Right cardiac atrium (tissue), 5 donors: ENCODE measurements at regions of chrX and their contacts with region 1.

Region 1: DNA sequence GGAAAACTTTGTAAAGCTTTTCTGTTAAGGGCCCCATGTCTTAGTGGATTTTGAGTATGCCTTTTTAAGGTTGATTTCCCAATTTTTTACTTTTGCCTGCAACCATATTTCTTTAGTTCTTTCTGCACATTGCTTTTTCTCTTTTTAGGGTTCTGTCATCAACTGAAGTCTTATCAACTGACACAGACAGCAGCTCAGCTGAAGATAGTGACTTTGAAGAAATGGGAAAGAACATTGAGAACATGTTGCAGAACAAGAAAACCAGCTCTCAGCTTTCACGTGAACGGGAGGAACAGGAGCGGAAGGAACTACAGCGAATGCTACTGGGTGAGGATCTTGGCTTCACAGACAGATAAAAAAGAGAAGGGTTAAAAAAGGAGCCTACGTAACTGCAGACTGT is 27.8 kb downstream of the TAF1 start:
- DNase-seq: no peak
- ATAC-seq: no peak
- H3K4me3 ChIP-seq: no peak overlapping the region
- H3K27ac ChIP-seq: no peak overlapping the region
- H3K4me1 ChIP-seq: no peaks in the 10 kb centered on the region
- H3K27me3 ChIP-seq: no peaks in the 10 kb centered on the region

Region 2: DNA sequence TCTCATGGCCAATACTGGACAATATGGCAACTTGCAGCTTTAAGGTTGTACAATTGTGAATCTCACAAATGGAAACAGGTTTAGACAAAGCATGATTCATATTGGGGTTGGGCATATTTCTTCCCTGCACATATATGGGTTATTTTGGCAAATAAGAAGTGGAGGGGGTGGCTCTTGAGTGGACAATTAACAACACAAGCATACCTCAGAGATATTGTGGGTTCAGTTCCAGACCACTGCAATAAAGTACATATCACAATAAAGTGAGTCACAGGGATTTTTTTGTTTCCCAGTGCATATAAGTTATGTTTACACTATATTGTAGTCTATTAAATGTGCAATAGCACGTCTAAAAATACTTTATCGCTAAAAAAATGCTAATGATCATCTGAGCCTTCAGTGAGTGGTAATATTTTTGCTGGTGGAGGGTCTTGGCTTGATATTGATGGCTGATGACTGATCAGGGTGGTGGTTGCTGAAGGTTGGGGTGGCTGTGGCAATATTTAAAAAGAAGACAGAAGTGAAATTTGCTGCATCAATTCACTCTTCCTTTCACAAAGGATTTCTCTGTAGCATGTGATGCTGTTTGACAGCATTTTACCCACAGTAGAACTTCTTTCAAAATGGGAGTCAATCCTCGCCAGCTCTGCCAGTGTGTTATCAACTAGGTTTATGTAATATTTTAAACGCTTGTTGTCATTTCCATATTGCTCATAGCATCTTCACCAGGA is 88.5 kb after region 1 on chrX:
- intact Hi-C with region 1: no loop called
- DNase-seq: no peak
- ATAC-seq: no peak
- H3K4me3 ChIP-seq: no peak overlapping the region
- H3K27ac ChIP-seq: no peak overlapping the region
- H3K4me1 ChIP-seq: no peaks in the 10 kb centered on the region
- H3K27me3 ChIP-seq: no peaks in the 10 kb centered on the region

Region 3: DNA sequence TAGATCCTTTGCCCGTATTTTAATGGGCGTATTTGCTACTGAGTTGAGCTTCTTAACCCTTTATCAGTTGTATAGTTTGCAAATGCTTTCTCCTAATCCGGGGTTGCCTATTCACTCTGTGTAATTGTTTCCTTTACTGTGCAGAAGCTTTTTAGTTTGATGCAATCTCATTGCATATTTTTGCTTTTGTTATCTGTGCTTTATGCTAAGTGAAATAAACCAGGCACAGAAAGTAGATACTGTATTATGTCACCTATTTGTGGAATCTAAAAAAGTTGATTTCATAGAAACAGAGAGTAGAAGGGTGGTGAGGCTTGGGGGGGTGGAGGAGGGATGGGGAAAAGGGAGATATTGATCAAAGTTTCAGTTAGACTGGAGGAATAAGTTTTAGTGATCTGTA is 156.7 kb after region 1 on chrX:
- intact Hi-C with region 1: loop called in 1 of 4 experiments (anchors 10 kb)
- DNase-seq: no peak
- ATAC-seq: no peak
- H3K4me3 ChIP-seq: no peak overlapping the region
- H3K27ac ChIP-seq: no peak overlapping the region
- H3K4me1 ChIP-seq: no peaks in the 10 kb centered on the region
- H3K27me3 ChIP-seq: no peaks in the 10 kb centered on the region

Region 4: DNA sequence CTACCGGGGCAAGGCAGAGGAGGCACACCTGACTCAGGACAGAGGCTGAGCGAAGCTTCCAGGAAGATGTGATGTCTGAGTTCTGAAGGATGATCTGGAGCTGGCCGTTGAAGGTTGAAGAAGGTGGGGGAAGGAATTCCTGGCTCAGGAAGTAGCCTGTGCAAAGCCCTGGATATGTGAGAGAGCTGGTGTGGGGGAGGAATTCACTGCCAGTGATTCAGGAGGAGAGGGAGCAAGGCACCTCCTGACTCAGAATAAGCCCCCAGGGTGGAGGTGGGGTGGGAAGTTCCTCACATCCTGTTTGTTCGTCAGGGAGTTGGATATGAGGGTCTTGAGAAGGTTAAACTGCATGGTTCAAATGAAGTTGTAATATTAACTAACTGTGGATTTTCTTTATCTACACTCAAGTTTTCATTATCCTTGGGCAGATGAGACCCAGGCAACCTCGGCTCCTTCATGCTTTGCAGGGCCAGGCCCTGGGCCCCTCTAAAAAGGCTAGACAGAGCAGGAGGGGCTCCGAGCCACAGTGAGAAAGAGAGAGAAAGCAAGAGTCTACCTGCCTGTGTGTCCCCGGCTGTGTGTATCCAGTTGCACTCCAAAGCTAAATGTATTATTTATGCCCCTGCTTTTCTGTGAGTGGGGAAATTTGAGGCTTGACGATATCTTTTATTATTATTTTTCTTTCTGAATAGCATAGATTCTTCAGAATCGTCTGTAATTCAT is 523.9 kb after region 1 on chrX:
- intact Hi-C with region 1: no loop called
- DNase-seq: no peak
- ATAC-seq: peak in 1 of 2 donors; percentile 58
- H3K4me3 ChIP-seq: no peak overlapping the region
- H3K27ac ChIP-seq: no peak overlapping the region
- H3K4me1 ChIP-seq: no peaks in the 10 kb centered on the region
- H3K27me3 ChIP-seq: no peaks in the 10 kb centered on the region